ENCODE measurements at regions of chr12 and their contacts with region 1.

Region 1: GRCh38 chr12:96578526-96579125 is 89.2 kb downstream of the CFAP54 start:
- DNase-seq: no peak
- H3K4me3 ChIP-seq: no peak overlapping the region
- H3K27ac ChIP-seq: no peak overlapping the region
- H3K4me1 ChIP-seq: no peaks in the 10 kb centered on the region
- H3K27me3 ChIP-seq: no peaks in the 10 kb centered on the region
- CTCF ChIP-seq: peak; percentile 73

Region 2: GRCh38 chr12:96070670-96071279 is 507.9 kb before region 1 on chr12:
- CTCF ChIA-PET with region 1: no interaction called
- POLR2A ChIA-PET with region 1: no interaction called
- intact Hi-C with region 1: no loop called
- DNase-seq: peak; percentile 53 to 72
- H3K4me3 ChIP-seq: 0 out of 2 replicates have a peak overlapping the region, but pooled peaks have one; percentile 5
- H3K27ac ChIP-seq: peak overlapping the region; percentile 47
- H3K4me1 ChIP-seq: peaks cover 71% of the 10 kb centered on the region
- H3K27me3 ChIP-seq: no peaks in the 10 kb centered on the region
- CTCF ChIP-seq: no peak

Region 3: GRCh38 chr12:96510306-96510764 is 68.3 kb before region 1 on chr12:
- CTCF ChIA-PET with region 1: no interaction called
- POLR2A ChIA-PET with region 1: no interaction called
- intact Hi-C with region 1: no loop called
- DNase-seq: no peak
- H3K4me3 ChIP-seq: no peak overlapping the region
- H3K27ac ChIP-seq: no peak overlapping the region
- H3K4me1 ChIP-seq: no peaks in the 10 kb centered on the region
- H3K27me3 ChIP-seq: no peaks in the 10 kb centered on the region
- CTCF ChIP-seq: no peak

Region 4: GRCh38 chr12:96548384-96548783 is 30.2 kb before region 1 on chr12:
- CTCF ChIA-PET with region 1: no interaction called
- POLR2A ChIA-PET with region 1: no interaction called
- intact Hi-C with region 1: no loop called
- DNase-seq: no peak
- H3K4me3 ChIP-seq: no peak overlapping the region
- H3K27ac ChIP-seq: no peak overlapping the region
- H3K4me1 ChIP-seq: no peaks in the 10 kb centered on the region
- H3K27me3 ChIP-seq: no peaks in the 10 kb centered on the region
- CTCF ChIP-seq: no peak

Region 5: GRCh38 chr12:96985480-96986362 is 407.1 kb after region 1 on chr12:
- CTCF ChIA-PET with region 1: interaction called, 7 read pairs
- POLR2A ChIA-PET with region 1: no interaction called
- intact Hi-C with region 1: loop called (anchors 1 kb)
- DNase-seq: peak in 1 of 2 experiments; percentile 32
- H3K4me3 ChIP-seq: no peak overlapping the region; the same call in 1 of the 2 replicates
- H3K27ac ChIP-seq: no peak overlapping the region
- H3K4me1 ChIP-seq: no peaks in the 10 kb centered on the region
- H3K27me3 ChIP-seq: peaks cover 13% of the 10 kb centered on the region; the same call in 1 of the 2 replicates
- CTCF ChIP-seq: peak; percentile 68

Region 6: GRCh38 chr12:97308576-97309198 is 730.1 kb after region 1 on chr12:
- CTCF ChIA-PET with region 1: no interaction called
- POLR2A ChIA-PET with region 1: no interaction called
- intact Hi-C with region 1: loop called (anchors 5 kb)
- DNase-seq: peak in 1 of 2 experiments; percentile 37
- H3K4me3 ChIP-seq: no peak overlapping the region
- H3K27ac ChIP-seq: no peak overlapping the region
- H3K4me1 ChIP-seq: no peaks in the 10 kb centered on the region
- H3K27me3 ChIP-seq: no peaks in the 10 kb centered on the region
- CTCF ChIP-seq: peak; percentile 80

Region 7: GRCh38 chr12:98373025-98373554 is 1794.5 kb after region 1 on chr12:
- CTCF ChIA-PET with region 1: no interaction called
- POLR2A ChIA-PET with region 1: no interaction called
- intact Hi-C with region 1: loop called (anchors 1 kb)
- DNase-seq: no peak
- H3K4me3 ChIP-seq: no peak overlapping the region
- H3K27ac ChIP-seq: no peak overlapping the region
- H3K4me1 ChIP-seq: no peaks in the 10 kb centered on the region
- H3K27me3 ChIP-seq: peaks cover 62% of the 10 kb centered on the region
- CTCF ChIP-seq: peak; percentile 73